ENCODE measurements at regions of chr1 and their contacts with region 1.

Region 1: DNA sequence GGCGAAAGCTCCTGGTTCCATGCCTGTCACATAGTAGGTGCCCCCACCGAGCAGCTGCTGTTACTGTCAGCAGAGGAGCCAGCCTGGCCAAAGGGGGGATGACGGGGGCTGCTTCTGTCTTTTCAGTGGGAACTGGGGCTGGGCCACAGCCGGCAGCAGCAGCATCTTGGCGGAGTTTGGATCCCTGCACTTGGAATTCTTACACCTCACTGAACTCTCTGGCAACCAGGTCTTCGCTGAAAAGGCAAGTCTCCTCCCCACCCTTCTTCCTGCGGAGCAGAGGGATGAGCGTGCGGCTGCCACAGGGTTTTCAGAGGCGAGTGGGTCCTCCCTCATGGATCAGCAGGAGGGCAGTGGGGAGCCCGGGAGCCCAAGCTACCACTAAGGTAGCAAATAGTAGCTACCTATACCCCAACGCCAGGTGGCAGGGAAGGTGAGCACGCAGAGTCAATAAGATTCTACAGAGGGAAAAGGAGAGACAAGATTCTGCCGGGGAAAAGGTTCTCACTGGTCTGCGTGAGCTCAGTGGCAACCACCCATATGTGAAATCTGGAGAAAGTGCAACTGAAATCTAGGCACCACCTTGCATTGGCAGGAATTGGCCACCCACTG is 41.4 kb upstream of the SELENON start:
- DNase-seq: no peak
- ATAC-seq: peak; percentile 14; the same call in 1 of the 2 replicates
- H3K4me3 Mint-ChIP-seq: no peak overlapping the region
- H3K27ac Mint-ChIP-seq: no peak overlapping the region
- H3K4me1 Mint-ChIP-seq: peaks cover 29% of the 10 kb centered on the region
- H3K27me3 Mint-ChIP-seq: no peaks in the 10 kb centered on the region
- CTCF ChIP-seq: no peak

Region 2: GRCh38 chr1:25725490-25726130 is 33.0 kb before region 1 on chr1:
- CTCF ChIA-PET with region 1: interaction called, 10 read pairs
- POLR2A ChIA-PET with region 1: no interaction called
- DNase-seq: no peak
- ATAC-seq: peak; percentile 12; the same call in 1 of the 2 replicates
- H3K4me3 Mint-ChIP-seq: no peak overlapping the region
- H3K27ac Mint-ChIP-seq: no peak overlapping the region
- H3K4me1 Mint-ChIP-seq: peaks cover 55% of the 10 kb centered on the region
- H3K27me3 Mint-ChIP-seq: no peaks in the 10 kb centered on the region
- CTCF ChIP-seq: no peak

Region 3: DNA sequence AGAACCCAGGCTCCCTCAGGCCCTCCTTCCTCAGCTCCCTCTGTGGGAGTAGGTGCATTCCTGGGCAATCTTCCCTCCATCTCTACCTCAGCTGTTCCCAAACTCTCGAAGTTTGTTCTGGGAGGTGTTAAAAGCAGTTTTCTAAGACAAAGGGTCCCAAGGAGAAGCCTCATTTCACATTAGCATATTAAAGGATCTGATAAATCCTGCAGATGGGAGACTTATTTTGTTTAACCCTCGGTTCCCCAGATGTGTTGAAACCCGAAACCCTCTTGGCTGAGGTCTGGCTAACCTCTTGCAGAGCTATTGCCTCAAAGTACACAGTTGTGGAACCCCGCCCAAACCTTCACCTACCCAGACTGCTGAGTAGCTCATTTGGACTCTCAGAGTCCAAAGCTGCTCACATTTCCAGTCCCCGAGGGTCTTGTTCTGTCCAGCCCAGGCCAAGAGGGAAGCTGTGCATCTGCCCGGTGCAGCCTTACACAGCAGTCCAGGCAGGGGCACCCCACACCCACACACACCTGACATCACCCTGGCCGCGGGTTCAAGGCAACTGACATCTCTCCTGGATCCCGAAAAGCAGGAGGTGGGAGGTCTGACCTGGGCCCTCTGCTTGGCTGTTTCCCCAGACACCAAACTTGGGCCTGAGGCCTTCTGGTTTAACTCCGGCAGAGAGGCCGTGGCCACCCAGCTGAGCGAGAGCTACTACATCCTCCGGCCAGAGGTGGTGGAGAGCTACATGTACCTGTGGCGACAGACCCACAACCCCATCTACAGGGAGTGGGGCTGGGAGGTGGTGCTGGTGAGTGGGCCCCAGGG is 21.9 kb after region 1 on chr1:
- CTCF ChIA-PET with region 1: interaction called, 14 read pairs
- POLR2A ChIA-PET with region 1: no interaction called
- DNase-seq: peak; percentile 50
- ATAC-seq: peak; percentile 84
- H3K4me3 Mint-ChIP-seq: no peak overlapping the region
- H3K27ac Mint-ChIP-seq: peak overlapping the region; percentile 72
- H3K4me1 Mint-ChIP-seq: peaks cover 62% of the 10 kb centered on the region
- H3K27me3 Mint-ChIP-seq: peaks cover 5% of the 10 kb centered on the region; the same call in 1 of the 2 replicates
- CTCF ChIP-seq: no peak

Region 4: GRCh38 chr1:25796811-25797458 is 38.4 kb after region 1 on chr1:
- CTCF ChIA-PET with region 1: interaction called, 20 read pairs
- POLR2A ChIA-PET with region 1: no interaction called
- DNase-seq: peak; percentile 95
- ATAC-seq: peak; percentile 27
- H3K4me3 Mint-ChIP-seq: no peak overlapping the region; the same call in 1 of the 2 replicates
- H3K27ac Mint-ChIP-seq: peak overlapping the region; percentile 29; the same call in 1 of the 2 replicates
- H3K4me1 Mint-ChIP-seq: peaks cover 30% of the 10 kb centered on the region
- H3K27me3 Mint-ChIP-seq: peaks cover 4% of the 10 kb centered on the region
- CTCF ChIP-seq: peak; percentile 77

Region 5: DNA sequence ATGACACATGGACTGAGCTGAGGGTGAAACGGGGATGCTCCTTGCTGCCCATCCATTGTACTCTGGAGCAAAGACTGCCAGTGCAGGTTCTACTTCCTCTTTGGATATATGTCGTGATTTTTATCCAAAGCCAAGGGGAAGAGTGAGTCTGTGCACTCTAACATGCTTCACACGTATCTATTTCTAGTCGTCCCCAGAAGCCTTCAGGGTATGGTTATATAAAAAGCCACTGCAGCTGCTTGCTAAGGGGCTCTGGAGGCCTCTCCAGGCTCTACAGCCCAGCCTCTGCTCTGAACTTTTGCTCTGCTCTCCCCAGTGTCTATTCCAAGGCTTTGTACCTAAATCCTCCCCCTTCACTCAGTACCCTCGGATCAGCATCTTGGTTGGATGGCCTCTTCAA is 219.2 kb after region 1 on chr1:
- CTCF ChIA-PET with region 1: no interaction called
- POLR2A ChIA-PET with region 1: no interaction called
- DNase-seq: no peak
- ATAC-seq: no peak
- H3K4me3 Mint-ChIP-seq: no peak overlapping the region
- H3K27ac Mint-ChIP-seq: no peak overlapping the region
- H3K4me1 Mint-ChIP-seq: no peaks in the 10 kb centered on the region
- H3K27me3 Mint-ChIP-seq: no peaks in the 10 kb centered on the region
- CTCF ChIP-seq: no peak

Measured in WTC11 (cell line).